Left cardiac atrium (tissue), 4 donors: ENCODE measurements at regions of chr1 and their contacts with region 1.

Region 1: DNA sequence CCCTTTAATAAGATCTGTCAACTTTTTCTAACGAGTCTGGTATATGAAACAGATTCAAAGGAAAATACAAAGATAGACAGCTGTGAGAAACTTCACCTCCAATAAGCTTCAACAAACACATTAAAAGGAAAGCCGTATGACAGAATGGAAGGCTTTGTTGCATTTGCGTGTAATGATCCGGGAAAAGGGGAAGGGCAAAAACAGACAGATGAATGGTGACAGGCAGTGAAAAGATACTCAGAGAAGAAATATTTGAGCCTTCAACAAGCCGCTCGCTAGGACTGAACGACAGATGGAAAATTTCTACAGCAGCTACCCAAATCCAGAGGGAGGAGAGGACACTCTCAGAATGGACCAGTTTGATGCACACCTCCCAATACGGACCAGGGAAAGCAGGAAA is 14.9 kb downstream of the COPA start:
- DNase-seq: no peak
- ATAC-seq: no peak

Region 2: DNA sequence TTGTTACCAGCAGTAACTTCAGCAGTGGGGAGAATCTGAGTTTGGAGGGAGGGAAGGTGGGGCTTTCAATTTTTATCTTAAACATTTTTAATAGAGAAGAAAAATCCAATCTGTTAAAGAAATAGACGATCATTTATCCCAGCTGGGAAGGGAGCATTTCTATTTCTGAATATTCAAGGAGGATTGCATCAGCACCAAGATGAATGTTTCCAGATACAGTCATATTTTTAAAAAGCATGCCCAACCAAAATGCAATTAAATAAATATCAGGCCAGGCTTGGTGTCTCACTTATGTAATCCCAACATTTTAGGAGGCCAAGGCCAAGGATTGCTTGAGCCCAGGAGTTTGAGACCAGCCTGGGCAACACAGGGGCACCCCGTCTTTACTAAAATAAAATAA is 178.5 kb before region 1 on chr1:
- intact Hi-C with region 1: no loop called
- DNase-seq: no peak
- ATAC-seq: no peak

Region 3: GRCh38 chr1:160291248-160292220 is 36.6 kb before region 1 on chr1:
- intact Hi-C with region 1: loop called in 1 of 2 experiments (anchors 5 kb)
- DNase-seq: peak; percentile 53
- ATAC-seq: peak; percentile 84 to 86